Naive thymus-derived CD4-positive, alpha-beta T cell (primary cell): ENCODE measurements at regions of chr1 and their contacts with region 1.

Region 1: DNA sequence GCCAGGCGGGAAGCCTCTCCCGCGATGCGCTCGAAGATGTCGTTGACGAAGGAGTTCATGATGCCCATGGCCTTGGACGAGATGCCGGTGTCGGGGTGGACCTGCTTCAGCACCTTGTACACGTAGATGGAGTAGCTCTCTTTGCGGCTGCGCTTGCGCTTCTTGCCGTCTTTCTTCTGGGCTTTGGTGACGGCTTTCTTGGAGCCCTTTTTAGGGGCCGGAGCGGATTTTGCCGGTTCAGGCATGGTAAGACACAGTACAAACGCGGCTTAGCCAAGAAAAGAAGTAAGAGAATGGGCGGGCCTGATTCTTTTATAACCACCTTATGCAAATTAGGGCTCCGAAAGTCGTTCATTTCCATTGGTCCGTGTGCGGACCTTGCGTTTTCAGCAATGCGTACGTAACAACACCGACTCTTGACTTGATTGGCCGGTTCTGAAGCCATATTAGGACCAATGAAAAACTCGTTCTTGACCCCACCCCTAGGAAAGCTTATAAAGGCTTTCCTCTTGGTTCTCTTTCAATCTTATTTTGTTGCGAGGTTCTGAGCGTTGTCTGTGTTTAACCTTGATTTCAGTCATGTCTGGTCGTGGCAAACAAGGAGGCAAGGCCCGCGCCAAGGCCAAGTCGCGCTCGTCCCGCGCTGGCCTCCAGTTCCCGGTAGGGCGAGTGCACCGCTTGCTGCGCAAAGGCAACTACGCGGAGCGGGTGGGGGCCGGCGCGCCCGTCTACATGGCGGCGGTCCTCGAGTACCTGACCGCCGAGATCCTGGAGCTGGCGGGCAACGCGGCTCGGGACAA is 12.8 kb upstream of the BOLA1 start:
- DNase-seq: peak; percentile 71 to 98 (median 95)
- ATAC-seq: peak; percentile 79
- H3K4me3 ChIP-seq: peak overlapping the region; percentile 97
- H3K4me3 Mint-ChIP-seq: no peak overlapping the region
- H3K27ac ChIP-seq: peak overlapping the region; percentile 93
- H3K27ac Mint-ChIP-seq: no peak overlapping the region
- H3K4me1 ChIP-seq: peaks cover 17 to 28% of the 10 kb centered on the region in 2 donors
- H3K4me1 Mint-ChIP-seq: peaks cover 10 to 15% (median 12%) of the 10 kb centered on the region in 7 donors
- H3K27me3 ChIP-seq: no peaks in the 10 kb centered on the region
- H3K27me3 Mint-ChIP-seq: no peaks in the 10 kb centered on the region

Region 2: GRCh38 chr1:149917571-149918144 is 31.1 kb after region 1 on chr1 and contains the start of gene SV2A:
- CTCF ChIA-PET with region 1: no interaction called
- POLR2A ChIA-PET with region 1: interaction called, 47 read pairs
- intact Hi-C with region 1: loop called in 1 of 2 experiments (anchors 1 kb)
- DNase-seq: peak in 8 of 9 donors; percentile 5 to 57 (median 20)
- ATAC-seq: peak; percentile 80
- H3K4me3 ChIP-seq: peak within 1 kb of the TSS; percentile 81
- H3K4me3 Mint-ChIP-seq: peak within 1 kb of the TSS; percentile 68 to 97 (median 88)
- H3K27ac ChIP-seq: peak within 1 kb of the TSS; percentile 36
- H3K27ac Mint-ChIP-seq: peak within 1 kb of the TSS in 8 of 9 donors; percentile 26 to 91 (median 70)
- H3K4me1 ChIP-seq: peaks cover 7 to 33% of the 10 kb centered on the region in 2 donors
- H3K4me1 Mint-ChIP-seq: peaks cover 22 to 57% (median 47%) of the 10 kb centered on the region in 7 donors
- H3K27me3 ChIP-seq: no peaks in the 10 kb centered on the region
- H3K27me3 Mint-ChIP-seq: no peaks in the 10 kb centered on the region
- total RNA-seq, gene SV2A: 2.6 to 18.8 (median 3.1) TPM

Region 3: GRCh38 chr1:150010393-150011115 is 124.0 kb after region 1 on chr1 and contains the start of gene OTUD7B:
- CTCF ChIA-PET with region 1: no interaction called
- POLR2A ChIA-PET with region 1: interaction called, 11 read pairs
- intact Hi-C with region 1: no loop called
- DNase-seq: peak; percentile 5 to 85 (median 46)
- ATAC-seq: peak; percentile 92
- H3K4me3 ChIP-seq: peak within 1 kb of the TSS; percentile 89
- H3K4me3 Mint-ChIP-seq: peak within 1 kb of the TSS; percentile 88 to 99 (median 96)
- H3K27ac ChIP-seq: peak within 1 kb of the TSS; percentile 73
- H3K27ac Mint-ChIP-seq: peak within 1 kb of the TSS; percentile 85 to 93 (median 87)
- H3K4me1 ChIP-seq: peaks cover 8 to 12% of the 10 kb centered on the region in 2 donors
- H3K4me1 Mint-ChIP-seq: peaks cover 21 to 38% (median 31%) of the 10 kb centered on the region in 7 donors
- H3K27me3 ChIP-seq: no peaks in the 10 kb centered on the region
- H3K27me3 Mint-ChIP-seq: peaks cover 0 to 12% (median 0%) of the 10 kb centered on the region in 5 donors
- total RNA-seq, gene OTUD7B: 4.6 to 12.8 (median 9.7) TPM

Region 4: GRCh38 chr1:150106341-150106740 is 219.7 kb after region 1 on chr1:
- CTCF ChIA-PET with region 1: no interaction called
- POLR2A ChIA-PET with region 1: interaction called, 25 read pairs
- intact Hi-C with region 1: no loop called
- DNase-seq: peak in 7 of 9 donors; percentile 29 to 67 (median 56)
- ATAC-seq: peak; percentile 85
- H3K4me3 ChIP-seq: no peak overlapping the region
- H3K4me3 Mint-ChIP-seq: peak overlapping the region; percentile 55 to 86 (median 75)
- H3K27ac ChIP-seq: peak overlapping the region; percentile 62
- H3K27ac Mint-ChIP-seq: peak overlapping the region; percentile 79 to 96 (median 94)
- H3K4me1 ChIP-seq: peaks cover 36 to 48% of the 10 kb centered on the region in 2 donors
- H3K4me1 Mint-ChIP-seq: peaks cover 44 to 91% (median 85%) of the 10 kb centered on the region in 7 donors
- H3K27me3 ChIP-seq: no peaks in the 10 kb centered on the region
- H3K27me3 Mint-ChIP-seq: no peaks in the 10 kb centered on the region

Region 5: DNA sequence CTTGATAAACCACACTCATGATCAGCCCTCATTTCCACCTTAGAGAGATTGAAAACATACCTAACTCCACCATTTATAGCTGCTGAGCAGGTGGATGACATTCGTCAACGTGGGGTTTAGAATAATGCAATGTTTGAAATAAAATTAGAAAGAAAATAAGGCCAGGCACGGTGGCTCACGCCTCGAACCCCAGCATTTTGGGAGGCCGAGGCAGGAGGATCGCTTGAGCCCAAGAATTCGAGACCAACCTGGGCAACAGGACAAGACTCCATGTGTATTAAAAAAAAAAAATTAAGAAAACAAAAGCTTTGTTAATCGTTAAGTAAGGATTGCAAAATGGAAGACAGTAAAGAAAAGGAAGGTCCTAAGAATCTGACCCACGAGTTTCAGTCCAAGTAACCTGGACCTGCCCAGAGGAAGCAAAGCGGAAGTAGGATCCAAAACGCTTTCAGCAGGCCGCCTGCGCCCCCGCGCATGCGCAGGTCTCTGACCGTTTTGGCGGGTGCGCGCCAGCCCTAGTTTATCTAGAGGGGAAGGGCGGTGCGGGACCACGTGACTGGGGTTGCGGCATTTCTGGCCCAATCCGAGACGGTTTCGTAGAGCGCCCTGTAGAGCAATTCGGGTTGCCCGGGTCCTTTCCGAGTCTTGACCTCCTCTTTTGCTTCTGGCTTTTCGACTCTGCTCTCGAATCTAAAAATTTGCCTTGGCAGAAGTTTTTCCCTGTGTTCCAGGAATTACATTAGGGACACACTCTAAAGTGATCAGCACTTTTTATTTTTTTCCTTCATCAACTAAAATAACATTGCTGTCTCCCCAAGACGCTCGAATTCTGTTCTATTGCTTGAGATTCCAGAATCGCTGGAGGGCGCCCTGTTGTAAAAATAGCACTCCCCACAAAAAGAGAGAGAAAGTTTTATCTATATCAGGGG is 326.8 kb after region 1 on chr1:
- CTCF ChIA-PET with region 1: no interaction called
- POLR2A ChIA-PET with region 1: interaction called, 10 read pairs
- intact Hi-C with region 1: no loop called
- DNase-seq: peak; percentile 72 to 92 (median 88)
- ATAC-seq: peak; percentile 100
- H3K4me3 ChIP-seq: peak overlapping the region; percentile 59
- H3K4me3 Mint-ChIP-seq: peak overlapping the region; percentile 75 to 95 (median 92)
- H3K27ac ChIP-seq: peak overlapping the region; percentile 69
- H3K27ac Mint-ChIP-seq: peak overlapping the region; percentile 84 to 98 (median 97)
- H3K4me1 ChIP-seq: peaks cover 6% of the 10 kb centered on the region in 2 donors
- H3K4me1 Mint-ChIP-seq: peaks cover 5 to 19% (median 18%) of the 10 kb centered on the region in 7 donors
- H3K27me3 ChIP-seq: no peaks in the 10 kb centered on the region
- H3K27me3 Mint-ChIP-seq: peaks cover 0 to 11% (median 0%) of the 10 kb centered on the region in 5 donors